ENCODE measurements at regions of chr1 and their contacts with region 1.

Region 1: GRCh38 chr1:169928438-169929209 is 34.9 kb upstream of the SCYL3 start:
- DNase-seq: peak in 1 of 2 experiments; percentile 60
- ATAC-seq: peak; percentile 78 to 89; a peak in 4 of 6 replicates
- H3K4me3 ChIP-seq: no peak overlapping the region
- H3K27ac ChIP-seq: no peak overlapping the region
- H3K4me1 ChIP-seq: no peaks in the 10 kb centered on the region
- CTCF ChIP-seq: peak; percentile 92
- EP300 ChIP-seq: no peak
- POLR2A ChIP-seq: no peak
- RAD21 ChIP-seq: peak; percentile 87 to 89

Region 2: GRCh38 chr1:170085091-170085490 is 156.5 kb after region 1 on chr1:
- CTCF ChIA-PET with region 1: no interaction called
- POLR2A ChIA-PET with region 1: no interaction called
- DNase-seq: no peak
- ATAC-seq: no peak
- H3K4me3 ChIP-seq: no peak overlapping the region
- H3K27ac ChIP-seq: no peak overlapping the region
- H3K4me1 ChIP-seq: no peaks in the 10 kb centered on the region
- CTCF ChIP-seq: no peak
- EP300 ChIP-seq: no peak
- POLR2A ChIP-seq: no peak
- RAD21 ChIP-seq: no peak

Region 3: DNA sequence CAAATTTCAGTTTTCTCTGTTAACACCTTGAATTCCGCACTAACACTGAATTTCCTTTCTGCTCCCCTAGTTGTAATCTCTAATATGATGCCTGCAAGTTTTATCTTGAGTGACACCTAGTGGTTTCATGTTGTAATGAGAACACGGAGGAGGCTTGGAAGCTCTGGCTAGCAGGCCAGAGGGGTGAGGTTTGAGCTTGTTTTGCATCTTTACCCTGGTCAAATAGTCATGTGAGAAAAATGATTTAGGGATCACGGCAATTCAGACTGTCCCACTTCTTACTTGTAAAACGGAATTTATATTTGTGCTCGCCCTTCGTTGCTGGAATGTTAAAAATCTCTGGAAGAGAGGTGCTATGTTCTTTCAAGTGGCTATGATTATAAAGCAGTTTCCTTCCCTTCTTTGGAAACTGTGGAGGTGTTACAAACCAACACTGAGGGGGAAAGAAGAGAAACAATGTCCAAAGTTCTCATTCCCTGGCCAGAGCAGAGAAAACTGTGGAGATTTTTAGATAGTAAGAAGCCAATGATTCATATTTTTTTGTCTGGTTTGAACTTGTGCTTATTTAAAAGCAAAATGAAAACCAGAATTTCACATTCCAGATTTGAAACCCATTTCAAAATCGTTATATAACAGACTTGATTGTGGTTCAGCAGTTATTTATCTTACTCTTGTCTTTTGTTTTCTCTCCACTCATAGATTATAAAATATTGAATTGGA is 1001.4 kb after region 1 on chr1:
- CTCF ChIA-PET with region 1: interaction called, 12 read pairs
- POLR2A ChIA-PET with region 1: no interaction called
- DNase-seq: peak; percentile 50 to 66
- ATAC-seq: peak; percentile 95 to 98
- H3K4me3 ChIP-seq: no peak overlapping the region
- H3K27ac ChIP-seq: no peak overlapping the region
- H3K4me1 ChIP-seq: no peaks in the 10 kb centered on the region
- CTCF ChIP-seq: peak; percentile 70
- EP300 ChIP-seq: no peak
- POLR2A ChIP-seq: no peak
- RAD21 ChIP-seq: peak; percentile 66 to 70

Measured in A549 (cell line).